B cell (primary cell): ENCODE measurements at regions of chr11 and their contacts with region 1.

Region 1: DNA sequence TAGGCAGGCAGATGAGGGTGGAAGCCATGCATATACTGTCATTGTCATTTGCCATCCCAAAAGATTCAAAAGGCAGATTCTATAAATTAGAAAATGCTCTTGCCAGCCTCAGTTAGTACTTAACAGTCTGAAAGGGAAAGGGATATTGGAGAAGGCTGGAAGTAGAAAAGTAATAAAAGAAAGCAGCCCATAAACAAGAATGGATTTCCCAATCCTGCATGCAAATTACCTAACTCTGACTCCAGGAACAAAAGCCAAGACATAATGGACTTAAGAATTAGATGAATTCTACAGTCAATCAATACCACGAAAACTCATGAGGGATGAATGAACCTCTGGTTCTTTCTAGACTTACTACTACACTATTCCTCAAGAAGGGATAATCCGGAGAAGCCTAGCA is 5.9 kb downstream of the PAK1 start:
- DNase-seq: no peak
- ATAC-seq: no peak
- H3K4me3 ChIP-seq: no peak overlapping the region
- H3K4me3 Mint-ChIP-seq: no peak overlapping the region
- H3K27ac ChIP-seq: no peak overlapping the region
- H3K27ac Mint-ChIP-seq: no peak overlapping the region
- H3K4me1 ChIP-seq: peaks cover 4 to 8% of the 10 kb centered on the region in 2 donors
- H3K4me1 Mint-ChIP-seq: peaks cover 9% of the 10 kb centered on the region
- H3K27me3 ChIP-seq: peaks cover 0 to 4% (median 1%) of the 10 kb centered on the region in 4 experiments
- H3K27me3 Mint-ChIP-seq: peaks cover 21% of the 10 kb centered on the region
- CTCF ChIP-seq: no peak

Region 2: DNA sequence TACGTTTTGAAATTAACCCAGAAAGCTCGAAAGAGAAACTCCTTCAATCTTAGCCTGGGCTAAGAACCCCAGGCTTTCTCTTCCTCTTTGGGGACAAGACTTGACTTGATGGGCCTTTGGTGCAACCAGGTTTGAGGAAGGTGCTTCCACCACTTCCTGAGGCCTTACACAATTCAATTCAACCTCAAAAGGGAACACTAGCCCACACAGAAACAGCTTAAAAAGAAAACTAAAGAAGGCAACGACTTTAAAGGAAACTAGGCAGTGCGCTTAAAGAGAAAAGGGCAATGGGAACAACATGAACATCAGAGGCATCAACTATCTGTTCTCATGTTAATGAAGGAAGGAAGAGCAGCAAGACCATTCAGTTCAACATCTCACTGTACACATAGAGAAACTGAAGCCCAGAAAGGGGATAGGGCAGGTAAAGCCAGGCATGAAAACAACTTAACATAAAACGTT is 18.9 kb before region 1 on chr11:
- CTCF ChIA-PET with region 1: no interaction called
- POLR2A ChIA-PET with region 1: no interaction called
- intact Hi-C with region 1: loop called (anchors 2 kb)
- DNase-seq: peak; percentile 44
- ATAC-seq: no peak
- H3K4me3 ChIP-seq: no peak overlapping the region
- H3K4me3 Mint-ChIP-seq: no peak overlapping the region
- H3K27ac ChIP-seq: peak overlapping the region in 1 of 2 donors; percentile 52
- H3K27ac Mint-ChIP-seq: peak overlapping the region; percentile 12
- H3K4me1 ChIP-seq: peaks cover 10 to 11% of the 10 kb centered on the region in 2 donors
- H3K4me1 Mint-ChIP-seq: peaks cover 18% of the 10 kb centered on the region
- H3K27me3 ChIP-seq: no peaks in the 10 kb centered on the region
- H3K27me3 Mint-ChIP-seq: peaks cover 1% of the 10 kb centered on the region
- CTCF ChIP-seq: no peak